ENCODE measurements at regions of chr16 and their contacts with region 1.

Region 1: GRCh38 chr16:57167953-57168352 is 17.9 kb downstream of the PSME3IP1 start:
- DNase-seq: no peak
- ATAC-seq: peak; percentile 87
- H3K4me3 ChIP-seq: no peak overlapping the region
- H3K27ac ChIP-seq: peak overlapping the region; percentile 20
- H3K4me1 ChIP-seq: peaks cover 22% of the 10 kb centered on the region
- H3K27me3 ChIP-seq: no peaks in the 10 kb centered on the region
- CTCF ChIP-seq: peak; percentile 62

Region 2: DNA sequence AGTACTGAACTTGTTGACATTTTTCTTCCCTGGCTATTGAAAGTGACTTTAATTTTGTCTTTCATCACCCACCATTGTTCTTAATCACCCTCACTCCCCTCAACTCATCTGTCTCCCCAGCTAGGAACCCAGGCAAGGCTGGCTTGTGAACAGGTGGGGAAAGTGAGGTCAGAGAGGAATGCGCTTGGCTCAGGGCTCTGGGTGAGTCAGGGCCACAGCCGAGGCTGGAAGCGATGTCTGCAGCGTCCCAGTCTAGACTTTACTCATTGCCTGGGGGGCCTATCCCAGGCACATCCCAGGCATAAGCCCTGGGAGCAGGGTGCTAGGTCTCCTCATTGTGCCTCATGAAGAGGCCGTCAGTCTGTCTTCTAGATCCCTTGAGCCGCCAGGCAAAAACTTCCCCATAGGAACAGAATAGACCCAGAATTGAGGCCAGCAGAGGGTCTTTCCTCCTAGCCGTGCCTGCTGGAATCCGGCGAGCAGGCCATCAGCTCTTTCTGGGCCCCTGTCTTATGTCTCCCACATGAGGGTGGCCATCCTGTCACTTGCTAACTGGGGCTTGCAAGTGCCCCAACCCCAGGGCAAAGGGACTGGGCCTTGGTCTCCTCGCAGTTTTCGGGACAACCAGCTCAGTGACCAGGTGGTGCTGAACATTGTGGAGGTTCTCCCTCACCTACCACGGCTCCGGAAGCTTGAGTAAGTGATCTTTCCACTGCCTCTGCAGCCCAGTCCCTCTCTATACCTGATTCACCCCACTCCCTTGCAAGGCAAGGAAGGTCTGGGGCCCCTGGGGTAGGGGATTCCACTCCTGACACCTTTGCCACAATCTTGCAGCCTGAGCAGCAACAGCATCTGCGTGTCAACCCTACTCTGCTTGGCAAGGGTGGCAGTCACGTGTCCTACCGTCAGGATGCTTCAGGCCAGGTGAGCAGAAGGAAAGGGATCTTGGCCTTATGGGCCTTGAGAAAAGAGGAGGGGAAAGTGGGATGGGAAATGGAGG is 138.5 kb before region 1 on chr16:
- intact Hi-C with region 1: no loop called
- DNase-seq: no peak
- ATAC-seq: no peak
- H3K4me3 ChIP-seq: no peak overlapping the region
- H3K27ac ChIP-seq: no peak overlapping the region
- H3K4me1 ChIP-seq: no peaks in the 10 kb centered on the region
- H3K27me3 ChIP-seq: no peaks in the 10 kb centered on the region
- CTCF ChIP-seq: no peak

Region 3: GRCh38 chr16:57089406-57089805 is 78.5 kb before region 1 on chr16:
- intact Hi-C with region 1: loop called (anchors 5 kb)
- DNase-seq: no peak
- ATAC-seq: no peak
- H3K4me3 ChIP-seq: no peak overlapping the region
- H3K27ac ChIP-seq: no peak overlapping the region
- H3K4me1 ChIP-seq: peaks cover 30% of the 10 kb centered on the region
- H3K27me3 ChIP-seq: no peaks in the 10 kb centered on the region
- CTCF ChIP-seq: no peak

Region 4: GRCh38 chr16:57213462-57213861 is 45.5 kb after region 1 on chr16:
- intact Hi-C with region 1: no loop called
- DNase-seq: no peak
- ATAC-seq: no peak
- H3K4me3 ChIP-seq: no peak overlapping the region
- H3K27ac ChIP-seq: no peak overlapping the region
- H3K4me1 ChIP-seq: no peaks in the 10 kb centered on the region
- H3K27me3 ChIP-seq: no peaks in the 10 kb centered on the region
- CTCF ChIP-seq: no peak